ENCODE measurements at regions of chr19 and their contacts with region 1.

Region 1: DNA sequence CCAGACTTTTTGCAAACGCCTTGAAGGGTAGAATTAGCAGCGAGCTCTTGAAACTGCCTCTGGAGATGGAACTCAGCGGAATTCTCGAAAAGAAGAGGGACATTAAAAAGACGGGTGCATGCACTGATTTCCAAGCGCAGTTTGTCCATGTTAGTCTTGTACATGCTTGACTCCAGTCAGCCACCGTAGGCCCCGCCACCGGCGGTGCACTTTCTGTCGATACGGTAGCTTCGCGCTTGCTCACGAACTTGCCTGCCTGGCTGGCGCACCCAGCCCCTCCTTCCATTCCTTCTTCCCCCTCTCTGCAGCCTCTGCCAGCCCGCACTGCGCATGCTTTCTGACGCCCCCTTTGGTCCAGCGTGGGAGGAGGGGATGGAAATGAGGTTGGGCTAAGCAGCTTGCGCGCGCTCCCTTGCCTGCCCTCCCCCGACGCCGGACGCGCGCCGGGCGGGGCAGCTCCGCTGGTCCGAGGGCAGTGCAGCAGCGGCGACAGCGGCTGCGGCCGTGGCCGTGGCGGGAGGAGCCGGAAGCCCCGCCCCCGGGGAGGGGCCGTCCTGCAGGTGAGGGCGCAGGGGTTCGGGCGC is at the start of gene ZNF575:
- DNase-seq: peak; percentile 81 to 95
- H3K4me3 ChIP-seq: peak within 1 kb of the TSS; percentile 63
- H3K27ac ChIP-seq: peak within 1 kb of the TSS; percentile 54
- H3K4me1 ChIP-seq: peaks cover 25% of the 10 kb centered on the region
- H3K27me3 ChIP-seq: no peaks in the 10 kb centered on the region
- CTCF ChIP-seq: no peak
- total RNA-seq, gene ZNF575: 5.2 and 6.5 TPM in 2 replicates

Region 2: GRCh38 chr19:42857561-42857901 is 675.5 kb before region 1 on chr19:
- CTCF ChIA-PET with region 1: no interaction called
- POLR2A ChIA-PET with region 1: no interaction called
- intact Hi-C with region 1: no loop called
- DNase-seq: no peak
- H3K4me3 ChIP-seq: no peak overlapping the region
- H3K27ac ChIP-seq: no peak overlapping the region
- H3K4me1 ChIP-seq: peaks cover 13% of the 10 kb centered on the region
- H3K27me3 ChIP-seq: no peaks in the 10 kb centered on the region
- CTCF ChIP-seq: peak; percentile 14; the same call in 1 of the 2 replicates

Region 3: DNA sequence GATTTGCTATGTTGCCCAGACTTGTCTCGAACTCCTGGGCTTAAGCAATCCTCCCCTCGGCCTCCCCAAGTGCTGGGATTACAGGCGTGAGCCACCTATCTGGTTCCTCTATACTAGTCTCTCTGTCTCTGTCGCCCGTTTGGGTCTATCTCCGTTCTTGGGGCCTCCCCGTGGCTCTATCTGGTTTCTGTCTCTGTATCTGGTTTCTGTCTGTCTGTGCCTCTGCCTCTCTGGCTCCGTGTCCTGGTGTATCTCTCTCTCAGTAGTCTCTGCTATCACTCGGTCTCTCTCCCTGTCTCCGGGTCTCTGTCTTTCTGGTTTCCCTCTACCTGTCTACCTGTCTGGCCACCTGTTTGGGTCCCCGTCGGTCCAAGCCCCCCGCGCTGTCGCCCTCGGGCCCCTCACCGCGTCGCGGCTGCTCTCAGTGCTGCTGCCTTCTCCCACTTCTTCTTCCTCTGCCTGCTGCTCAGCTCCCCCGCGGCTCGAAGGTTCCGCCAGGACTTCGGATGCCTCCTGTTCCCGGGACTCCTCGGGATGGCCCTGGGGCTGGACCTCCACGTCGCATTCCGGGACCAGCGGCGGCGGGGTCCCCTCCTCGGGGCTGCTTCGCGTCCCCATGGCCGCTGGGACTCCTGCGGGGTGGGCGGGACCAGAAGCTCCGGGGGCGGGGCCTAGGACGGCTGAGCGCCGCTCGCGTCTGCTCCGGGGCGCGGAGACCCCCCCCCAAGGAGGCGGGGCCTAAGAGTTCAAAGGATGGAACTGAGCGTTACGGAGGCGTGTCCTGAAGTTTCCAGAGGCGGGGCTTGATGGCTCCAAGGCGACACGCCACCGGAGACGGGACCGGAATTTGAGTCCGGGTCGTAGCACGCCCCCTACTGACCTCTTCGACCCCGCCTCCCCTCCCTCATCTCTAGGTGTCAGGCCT is 29.3 kb before region 1 on chr19:
- CTCF ChIA-PET with region 1: interaction called, 9 read pairs
- POLR2A ChIA-PET with region 1: interaction called, 10 read pairs
- intact Hi-C with region 1: no loop called
- DNase-seq: peak; percentile 83 to 94
- H3K4me3 ChIP-seq: peak overlapping the region; percentile 74
- H3K27ac ChIP-seq: peak overlapping the region; percentile 63
- H3K4me1 ChIP-seq: peaks cover 11% of the 10 kb centered on the region
- H3K27me3 ChIP-seq: no peaks in the 10 kb centered on the region
- CTCF ChIP-seq: no peak

Region 4: GRCh38 chr19:43553656-43554055 is 20.6 kb after region 1 on chr19:
- CTCF ChIA-PET with region 1: interaction called, 15 read pairs
- POLR2A ChIA-PET with region 1: no interaction called
- intact Hi-C with region 1: no loop called
- DNase-seq: no peak
- H3K4me3 ChIP-seq: no peak overlapping the region
- H3K27ac ChIP-seq: no peak overlapping the region
- H3K4me1 ChIP-seq: no peaks in the 10 kb centered on the region
- H3K27me3 ChIP-seq: no peaks in the 10 kb centered on the region
- CTCF ChIP-seq: no peak

Region 5: GRCh38 chr19:43662487-43662886 is 129.4 kb after region 1 on chr19:
- CTCF ChIA-PET with region 1: interaction called, 10 read pairs
- POLR2A ChIA-PET with region 1: no interaction called
- intact Hi-C with region 1: no loop called
- DNase-seq: no peak
- H3K4me3 ChIP-seq: no peak overlapping the region
- H3K27ac ChIP-seq: no peak overlapping the region
- H3K4me1 ChIP-seq: peaks cover under 1% of the 10 kb centered on the region; the same call in 1 of the 2 replicates
- H3K27me3 ChIP-seq: no peaks in the 10 kb centered on the region
- CTCF ChIP-seq: peak; percentile 45; the same call in 1 of the 2 replicates

Region 6: DNA sequence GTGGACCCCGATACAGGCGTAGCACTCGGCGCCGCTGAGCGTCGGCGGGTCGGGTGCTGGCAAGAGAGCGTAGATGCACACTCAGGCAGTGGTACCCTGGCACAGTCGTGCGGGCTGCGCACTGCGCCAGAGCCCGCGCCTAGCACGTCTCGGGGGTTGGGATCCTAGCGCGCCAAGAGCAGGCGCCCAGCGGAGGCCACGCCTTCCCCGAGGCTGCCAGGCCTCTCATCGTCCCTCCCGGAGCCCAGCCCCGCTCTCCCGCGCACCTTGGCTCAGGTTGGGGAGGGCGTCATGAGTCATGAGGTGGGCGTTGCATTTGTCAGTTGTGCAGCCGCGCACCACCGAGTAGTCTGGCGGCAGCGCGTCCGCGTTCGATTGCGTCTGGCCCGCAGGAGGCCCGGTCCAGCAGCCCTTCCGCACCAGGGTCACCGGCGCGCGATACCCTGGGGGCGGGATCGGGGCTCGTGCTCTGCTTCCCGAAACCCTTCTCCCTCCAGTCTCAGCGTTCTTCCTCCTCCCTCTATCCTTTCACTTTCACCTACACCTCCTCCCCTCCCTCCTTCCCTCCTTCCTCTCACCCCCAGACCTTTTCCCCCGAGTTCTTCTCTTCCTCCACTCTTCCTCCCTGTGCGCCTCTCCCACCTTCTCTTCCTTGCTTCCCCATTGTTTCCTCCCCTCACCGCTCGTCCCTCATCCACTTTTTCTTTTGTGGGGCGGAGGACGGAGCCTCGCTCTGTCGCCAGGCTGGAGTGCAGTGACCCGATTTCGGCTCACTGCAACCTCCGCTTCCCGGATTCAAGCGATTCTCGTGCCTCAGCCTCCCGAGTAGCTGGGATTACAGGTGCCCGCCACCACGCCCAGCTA is 265.7 kb after region 1 on chr19:
- CTCF ChIA-PET with region 1: no interaction called
- POLR2A ChIA-PET with region 1: no interaction called
- intact Hi-C with region 1: loop called (anchors 5 kb)
- DNase-seq: peak; percentile 77 to 89
- H3K4me3 ChIP-seq: peak overlapping the region; percentile 63
- H3K27ac ChIP-seq: no peak overlapping the region
- H3K4me1 ChIP-seq: peaks cover 16% of the 10 kb centered on the region
- H3K27me3 ChIP-seq: no peaks in the 10 kb centered on the region
- CTCF ChIP-seq: no peak

Measured in PC-9 (cell line).